T-cell (primary cell): ENCODE measurements at regions of chr22 and their contacts with region 1.

Region 1: GRCh38 chr22:42565956-42566355 is 12.2 kb downstream of the SERHL2 start:
- DNase-seq: no peak
- ATAC-seq: no peak
- H3K4me3 ChIP-seq: no peak overlapping the region
- H3K4me3 Mint-ChIP-seq: no peak overlapping the region
- H3K27ac ChIP-seq: no peak overlapping the region
- H3K27ac Mint-ChIP-seq: no peak overlapping the region
- H3K4me1 ChIP-seq: no peaks in the 10 kb centered on the region
- H3K4me1 Mint-ChIP-seq: peaks cover 0 to 4% (median under 1%) of the 10 kb centered on the region in 3 donors
- H3K27me3 ChIP-seq: no peaks in the 10 kb centered on the region
- H3K27me3 Mint-ChIP-seq: no peaks in the 10 kb centered on the region

Region 2: GRCh38 chr22:42511401-42511891 is 54.5 kb before region 1 on chr22:
- CTCF ChIA-PET with region 1: interaction called in 1 of 2 experiments, 10 read pairs
- POLR2A ChIA-PET with region 1: no interaction called
- DNase-seq: no peak
- ATAC-seq: no peak
- H3K4me3 ChIP-seq: no peak overlapping the region
- H3K4me3 Mint-ChIP-seq: no peak overlapping the region
- H3K27ac ChIP-seq: no peak overlapping the region
- H3K27ac Mint-ChIP-seq: no peak overlapping the region
- H3K4me1 ChIP-seq: peaks cover 0 to 3% of the 10 kb centered on the region in 2 experiments
- H3K4me1 Mint-ChIP-seq: peaks cover 0 to 7% (median 0%) of the 10 kb centered on the region in 3 donors
- H3K27me3 ChIP-seq: no peaks in the 10 kb centered on the region
- H3K27me3 Mint-ChIP-seq: no peaks in the 10 kb centered on the region